Mammary epithelial cell (primary cell): ENCODE measurements at regions of chr7 and their contacts with region 1.

Region 1: DNA sequence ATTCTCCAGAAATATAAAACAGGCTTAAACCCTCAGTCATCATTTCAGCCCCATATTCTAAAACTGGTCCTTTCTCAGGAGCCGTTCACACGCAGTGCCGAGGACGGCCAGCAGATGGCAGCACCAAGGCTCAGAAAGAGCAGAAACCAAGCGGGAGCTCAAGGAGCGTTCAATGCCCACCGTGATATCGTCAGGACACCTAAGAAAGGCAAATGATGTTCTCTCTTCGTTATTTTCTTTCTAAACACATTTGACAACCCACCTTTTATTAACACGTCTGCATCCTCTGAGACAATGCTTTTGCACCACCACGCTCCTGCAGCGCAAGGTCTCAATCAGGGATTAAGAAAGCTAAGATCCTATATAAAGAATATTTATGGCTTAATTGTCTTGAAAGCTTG is 45.7 kb upstream of the RBM33 start:
- DNase-seq: peak; percentile 46
- H3K4me3 ChIP-seq: no peak overlapping the region
- H3K27ac ChIP-seq: no peak overlapping the region
- H3K4me1 ChIP-seq: no peaks in the 10 kb centered on the region
- H3K27me3 ChIP-seq: peaks cover 13% of the 10 kb centered on the region
- CTCF ChIP-seq: peak; percentile 98

Region 2: GRCh38 chr7:155380221-155380861 is 218.5 kb before region 1 on chr7:
- CTCF ChIA-PET with region 1: no interaction called
- dilution Hi-C with region 1: no loop called
- in situ Hi-C with region 1: no loop called
- intact Hi-C with region 1: loop called (anchors 1 kb)
- DNase-seq: peak; percentile 59
- H3K4me3 ChIP-seq: no peak overlapping the region
- H3K27ac ChIP-seq: no peak overlapping the region
- H3K4me1 ChIP-seq: peaks cover 18% of the 10 kb centered on the region
- H3K27me3 ChIP-seq: peaks cover 72% of the 10 kb centered on the region
- CTCF ChIP-seq: peak; percentile 85 to 93

Region 3: GRCh38 chr7:155439311-155440017 is 159.3 kb before region 1 on chr7:
- CTCF ChIA-PET with region 1: no interaction called
- dilution Hi-C with region 1: no loop called
- in situ Hi-C with region 1: no loop called
- intact Hi-C with region 1: no loop called
- DNase-seq: no peak
- H3K4me3 ChIP-seq: no peak overlapping the region
- H3K27ac ChIP-seq: no peak overlapping the region
- H3K4me1 ChIP-seq: no peaks in the 10 kb centered on the region
- H3K27me3 ChIP-seq: peaks cover 13% of the 10 kb centered on the region
- CTCF ChIP-seq: no peak

Region 4: DNA sequence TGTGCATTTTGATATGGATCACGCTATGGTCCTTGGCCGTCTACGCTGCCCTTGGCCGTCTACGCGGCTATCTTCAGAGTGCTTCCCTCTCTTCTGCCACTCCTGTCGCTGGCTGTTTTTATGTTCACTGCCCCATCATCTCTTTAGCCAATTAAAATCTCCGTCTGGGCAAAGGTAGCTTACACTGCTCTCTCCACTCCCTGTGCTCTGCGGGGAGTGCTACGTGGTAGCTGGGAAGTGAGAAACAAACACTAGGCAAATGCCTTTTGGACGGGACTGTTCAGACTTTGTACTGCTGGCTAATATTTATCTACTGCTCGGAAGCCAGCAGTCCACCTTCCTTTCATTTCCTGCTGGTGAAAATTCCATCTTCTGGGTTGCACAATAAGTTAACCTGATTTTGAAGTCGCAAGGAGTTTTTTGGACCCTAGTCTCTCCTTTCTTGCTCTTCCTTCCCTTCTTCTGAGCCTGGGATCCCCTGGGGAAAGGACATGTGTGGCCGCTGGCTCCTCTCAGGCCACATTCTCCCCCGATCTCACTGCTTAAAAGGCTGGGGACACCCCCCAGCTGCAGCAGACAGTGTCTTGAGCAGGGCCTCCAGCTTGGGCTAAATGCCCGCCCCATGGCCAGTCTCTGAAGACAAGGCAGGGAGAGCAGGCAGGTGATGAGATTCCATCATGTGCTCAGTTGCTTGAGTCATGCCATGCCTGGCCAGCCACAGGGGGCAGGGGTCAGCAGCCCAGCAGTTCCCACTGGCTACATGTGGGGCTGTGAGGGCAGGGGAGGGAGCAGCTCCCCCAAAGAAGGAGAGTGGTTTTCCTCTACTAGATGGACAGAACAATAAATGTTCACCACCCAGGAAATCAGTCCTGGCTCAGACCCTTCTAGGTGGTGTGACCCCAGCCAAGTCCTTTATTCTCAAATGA is 20.2 kb after region 1 on chr7:
- CTCF ChIA-PET with region 1: no interaction called
- dilution Hi-C with region 1: no loop called
- in situ Hi-C with region 1: no loop called
- intact Hi-C with region 1: no loop called
- DNase-seq: no peak
- H3K4me3 ChIP-seq: no peak overlapping the region
- H3K27ac ChIP-seq: no peak overlapping the region
- H3K4me1 ChIP-seq: no peaks in the 10 kb centered on the region
- H3K27me3 ChIP-seq: no peaks in the 10 kb centered on the region
- CTCF ChIP-seq: no peak

Region 5: DNA sequence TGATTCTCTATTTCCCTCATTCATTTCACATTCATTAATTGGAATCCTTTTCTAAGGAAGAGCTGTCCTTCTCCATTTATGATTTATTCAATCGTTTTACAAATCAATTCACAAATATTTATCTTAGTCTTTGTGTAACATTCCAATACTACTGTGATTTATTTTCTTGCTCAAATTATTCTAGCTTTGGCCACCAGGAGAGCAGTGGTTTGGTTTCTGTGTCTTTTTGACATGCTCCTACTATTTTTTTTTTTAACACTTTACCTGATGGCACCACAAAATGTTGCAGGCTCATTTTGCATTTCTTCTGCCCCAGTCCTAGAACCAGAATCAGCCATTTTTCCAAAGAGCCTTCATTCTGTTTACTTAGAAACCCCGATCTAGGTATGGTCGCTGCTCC is 32.3 kb after region 1 on chr7:
- CTCF ChIA-PET with region 1: interaction called, 3 read pairs
- dilution Hi-C with region 1: loop called (anchors 5 kb)
- in situ Hi-C with region 1: no loop called
- intact Hi-C with region 1: no loop called
- DNase-seq: no peak
- H3K4me3 ChIP-seq: no peak overlapping the region
- H3K27ac ChIP-seq: no peak overlapping the region
- H3K4me1 ChIP-seq: no peaks in the 10 kb centered on the region
- H3K27me3 ChIP-seq: no peaks in the 10 kb centered on the region
- CTCF ChIP-seq: peak in 1 of 2 donors; percentile 3

Region 6: GRCh38 chr7:155702616-155703015 is 103.8 kb after region 1 on chr7:
- CTCF ChIA-PET with region 1: interaction called, 4 read pairs
- dilution Hi-C with region 1: no loop called
- in situ Hi-C with region 1: no loop called
- intact Hi-C with region 1: loop called (anchors 1 kb)
- DNase-seq: peak; percentile 93
- H3K4me3 ChIP-seq: no peak overlapping the region
- H3K27ac ChIP-seq: no peak overlapping the region
- H3K4me1 ChIP-seq: peaks cover 17% of the 10 kb centered on the region
- H3K27me3 ChIP-seq: no peaks in the 10 kb centered on the region
- CTCF ChIP-seq: no peak

Region 7: GRCh38 chr7:155763691-155764437 is 165.1 kb after region 1 on chr7:
- CTCF ChIA-PET with region 1: interaction called, 8 read pairs
- dilution Hi-C with region 1: no loop called
- in situ Hi-C with region 1: no loop called
- intact Hi-C with region 1: loop called (anchors 1 kb)
- DNase-seq: no peak
- H3K4me3 ChIP-seq: no peak overlapping the region
- H3K27ac ChIP-seq: no peak overlapping the region
- H3K4me1 ChIP-seq: no peaks in the 10 kb centered on the region
- H3K27me3 ChIP-seq: no peaks in the 10 kb centered on the region
- CTCF ChIP-seq: no peak